Caco-2 (cell line): ENCODE measurements at regions of chr20 and their contacts with region 1.

Region 1: GRCh38 chr20:5529331-5530148 is 212.8 kb upstream of the PROKR2 start:
- DNase-seq: peak; percentile 89 to 90
- H3K4me3 ChIP-seq: peak overlapping the region; percentile 36
- H3K4me3 Mint-ChIP-seq: peak overlapping the region; percentile 64
- H3K27ac Mint-ChIP-seq: no peak overlapping the region
- H3K4me1 ChIP-seq: 0 out of 2 replicates have a peak, but pooled peaks cover 3% of the 10 kb centered on the region
- H3K4me1 Mint-ChIP-seq: peaks cover 27% of the 10 kb centered on the region
- H3K27me3 ChIP-seq: no peaks in the 10 kb centered on the region; the same call in 1 of the 2 replicates
- H3K27me3 Mint-ChIP-seq: no peaks in the 10 kb centered on the region
- CTCF ChIP-seq: peak; percentile 78 to 95

Region 2: GRCh38 chr20:5489601-5490000 is 39.9 kb before region 1 on chr20:
- CTCF ChIA-PET with region 1: no interaction called
- POLR2A ChIA-PET with region 1: no interaction called
- intact Hi-C with region 1: no loop called
- DNase-seq: no peak
- H3K4me3 ChIP-seq: no peak overlapping the region
- H3K4me3 Mint-ChIP-seq: no peak overlapping the region
- H3K27ac Mint-ChIP-seq: no peak overlapping the region
- H3K4me1 ChIP-seq: no peaks in the 10 kb centered on the region
- H3K4me1 Mint-ChIP-seq: no peaks in the 10 kb centered on the region
- H3K27me3 ChIP-seq: no peaks in the 10 kb centered on the region
- H3K27me3 Mint-ChIP-seq: peaks cover 3% of the 10 kb centered on the region
- CTCF ChIP-seq: no peak

Region 3: DNA sequence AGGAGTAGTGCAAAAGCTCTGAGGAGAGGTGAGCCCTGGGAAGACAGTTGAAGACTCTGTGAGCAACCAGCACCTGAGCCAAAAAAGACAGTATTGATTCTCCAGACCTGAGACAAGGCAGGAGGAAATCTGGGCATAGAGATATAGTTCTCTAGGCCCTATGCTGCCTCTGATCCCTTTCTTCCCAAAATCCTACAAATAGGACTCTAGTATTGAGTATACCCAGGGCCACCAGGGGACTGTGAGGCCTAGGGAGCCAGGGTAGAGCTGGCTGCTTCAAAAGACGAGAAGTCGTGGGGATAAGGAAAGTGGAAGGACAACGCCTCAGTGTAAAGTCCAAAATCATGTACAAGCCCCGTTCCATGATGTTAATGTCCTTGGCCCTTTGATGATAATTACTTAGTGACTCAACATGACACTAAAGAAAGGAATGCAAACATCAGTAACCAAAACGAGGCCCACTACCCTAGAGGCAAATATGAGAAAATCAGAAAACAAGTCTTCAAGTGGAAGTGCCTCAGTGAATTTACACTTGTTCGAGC is 15.5 kb before region 1 on chr20:
- CTCF ChIA-PET with region 1: interaction called, 16 read pairs
- POLR2A ChIA-PET with region 1: no interaction called
- intact Hi-C with region 1: loop called (anchors 2 kb)
- DNase-seq: peak; percentile 84 to 89
- H3K4me3 ChIP-seq: no peak overlapping the region
- H3K4me3 Mint-ChIP-seq: peak overlapping the region; percentile 55
- H3K27ac Mint-ChIP-seq: peak overlapping the region; percentile 95
- H3K4me1 ChIP-seq: peaks cover 27% of the 10 kb centered on the region
- H3K4me1 Mint-ChIP-seq: peaks cover 8% of the 10 kb centered on the region
- H3K27me3 ChIP-seq: no peaks in the 10 kb centered on the region
- H3K27me3 Mint-ChIP-seq: no peaks in the 10 kb centered on the region
- CTCF ChIP-seq: peak in 1 of 2 experiments; percentile 35

Region 4: DNA sequence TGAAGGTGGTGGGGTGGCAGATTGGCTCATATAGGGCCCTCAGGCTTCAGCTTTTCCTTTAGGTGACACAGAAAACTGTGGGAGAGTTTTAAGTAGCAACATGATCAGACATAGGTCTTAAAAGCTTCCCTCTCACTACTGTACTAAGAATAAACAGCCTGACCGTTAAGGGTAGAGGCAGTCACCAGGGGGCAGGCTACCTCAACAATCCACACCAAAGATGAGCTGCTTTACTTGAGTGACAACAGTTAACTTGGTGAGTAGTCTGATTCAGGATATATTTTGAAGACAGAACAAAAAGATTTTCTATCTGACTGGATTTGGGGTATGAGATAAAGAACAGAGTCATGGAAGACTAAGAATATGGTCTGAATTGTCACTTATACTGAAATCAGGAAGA is 27.6 kb after region 1 on chr20:
- CTCF ChIA-PET with region 1: interaction called, 28 read pairs
- POLR2A ChIA-PET with region 1: no interaction called
- intact Hi-C with region 1: loop called (anchors 1 kb)
- DNase-seq: peak; percentile 55 to 72
- H3K4me3 ChIP-seq: no peak overlapping the region
- H3K4me3 Mint-ChIP-seq: no peak overlapping the region
- H3K27ac Mint-ChIP-seq: no peak overlapping the region
- H3K4me1 ChIP-seq: no peaks in the 10 kb centered on the region
- H3K4me1 Mint-ChIP-seq: peaks cover 4% of the 10 kb centered on the region
- H3K27me3 ChIP-seq: no peaks in the 10 kb centered on the region
- H3K27me3 Mint-ChIP-seq: no peaks in the 10 kb centered on the region
- CTCF ChIP-seq: peak; percentile 44 to 78

Region 5: DNA sequence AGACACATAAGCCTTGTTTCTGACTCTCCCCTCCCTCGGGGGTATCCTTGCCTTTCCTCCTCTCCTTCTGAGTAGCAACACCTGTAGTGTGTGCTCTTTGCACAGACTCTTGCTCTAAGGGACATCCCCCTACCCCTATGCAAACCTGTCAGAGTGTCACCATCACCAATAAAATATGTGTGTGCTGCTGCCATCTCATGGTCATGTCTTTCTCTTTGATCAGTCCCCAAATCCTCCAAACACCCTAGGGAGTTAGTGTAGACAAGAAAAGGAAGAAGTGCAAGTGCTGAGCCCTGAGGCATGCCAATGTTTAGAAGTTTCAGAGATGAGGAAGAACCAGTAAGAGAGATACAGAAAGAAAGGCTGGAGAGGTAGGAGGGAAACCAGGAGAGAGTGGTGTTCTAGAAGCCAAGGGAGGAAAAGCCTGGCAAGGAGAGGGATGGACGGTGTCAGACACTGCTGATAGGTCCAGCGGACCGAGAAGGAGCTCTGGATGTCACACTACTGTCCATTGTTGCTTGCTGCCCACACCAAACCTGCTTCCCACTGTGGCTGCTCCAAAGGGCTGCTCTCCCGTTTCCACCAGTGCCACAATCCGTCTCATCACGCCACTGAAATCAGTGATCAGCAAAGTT is 404.4 kb after region 1 on chr20:
- CTCF ChIA-PET with region 1: interaction called, 32 read pairs
- POLR2A ChIA-PET with region 1: no interaction called
- intact Hi-C with region 1: loop called (anchors 1 kb)
- DNase-seq: peak in 1 of 2 experiments; percentile 60
- H3K4me3 ChIP-seq: no peak overlapping the region
- H3K4me3 Mint-ChIP-seq: no peak overlapping the region
- H3K27ac Mint-ChIP-seq: no peak overlapping the region
- H3K4me1 ChIP-seq: no peaks in the 10 kb centered on the region
- H3K4me1 Mint-ChIP-seq: peaks cover 7% of the 10 kb centered on the region
- H3K27me3 ChIP-seq: no peaks in the 10 kb centered on the region
- H3K27me3 Mint-ChIP-seq: no peaks in the 10 kb centered on the region
- CTCF ChIP-seq: peak; percentile 31 to 51

Region 6: DNA sequence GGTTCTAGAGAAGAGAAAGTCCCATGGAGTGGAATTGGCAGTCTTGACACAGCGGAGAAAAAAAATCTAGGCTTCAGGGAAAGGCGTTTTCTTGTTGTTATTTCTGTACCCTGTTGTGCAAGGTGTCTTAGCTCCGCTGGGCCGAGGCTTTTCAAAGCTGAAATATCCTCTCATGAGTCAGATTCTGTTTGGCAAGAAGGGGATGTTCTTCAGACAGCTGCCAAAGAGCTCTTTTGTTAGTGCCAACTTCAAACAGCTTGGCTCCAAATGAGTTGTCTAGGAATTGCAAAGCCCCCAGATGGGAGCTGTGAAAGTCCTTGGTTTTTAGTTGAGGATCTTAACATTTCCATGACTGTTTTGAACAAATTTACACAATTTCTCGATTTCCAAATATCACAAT is 478.7 kb after region 1 on chr20:
- CTCF ChIA-PET with region 1: no interaction called
- POLR2A ChIA-PET with region 1: no interaction called
- intact Hi-C with region 1: loop called (anchors 1 kb)
- DNase-seq: peak in 1 of 2 experiments; percentile 30
- H3K4me3 ChIP-seq: peak overlapping the region; percentile 8; the same call in 1 of the 2 replicates
- H3K4me3 Mint-ChIP-seq: peak overlapping the region; percentile 89
- H3K27ac Mint-ChIP-seq: peak overlapping the region; percentile 75
- H3K4me1 ChIP-seq: peaks cover 12% of the 10 kb centered on the region
- H3K4me1 Mint-ChIP-seq: peaks cover 17% of the 10 kb centered on the region
- H3K27me3 ChIP-seq: no peaks in the 10 kb centered on the region
- H3K27me3 Mint-ChIP-seq: no peaks in the 10 kb centered on the region
- CTCF ChIP-seq: no peak